Tibial artery (tissue), 4 donors: ENCODE measurements at regions of chr22 and their contacts with region 1.

Region 1: GRCh38 chr22:46219636-46220035 is 30.5 kb downstream of the CDPF1 start:
- DNase-seq: no peak
- H3K4me3 ChIP-seq: no peak overlapping the region
- H3K27ac ChIP-seq: no peak overlapping the region
- H3K4me1 ChIP-seq: no peaks in the 10 kb centered on the region
- H3K27me3 ChIP-seq: no peaks in the 10 kb centered on the region
- CTCF ChIP-seq: no peak

Region 2: DNA sequence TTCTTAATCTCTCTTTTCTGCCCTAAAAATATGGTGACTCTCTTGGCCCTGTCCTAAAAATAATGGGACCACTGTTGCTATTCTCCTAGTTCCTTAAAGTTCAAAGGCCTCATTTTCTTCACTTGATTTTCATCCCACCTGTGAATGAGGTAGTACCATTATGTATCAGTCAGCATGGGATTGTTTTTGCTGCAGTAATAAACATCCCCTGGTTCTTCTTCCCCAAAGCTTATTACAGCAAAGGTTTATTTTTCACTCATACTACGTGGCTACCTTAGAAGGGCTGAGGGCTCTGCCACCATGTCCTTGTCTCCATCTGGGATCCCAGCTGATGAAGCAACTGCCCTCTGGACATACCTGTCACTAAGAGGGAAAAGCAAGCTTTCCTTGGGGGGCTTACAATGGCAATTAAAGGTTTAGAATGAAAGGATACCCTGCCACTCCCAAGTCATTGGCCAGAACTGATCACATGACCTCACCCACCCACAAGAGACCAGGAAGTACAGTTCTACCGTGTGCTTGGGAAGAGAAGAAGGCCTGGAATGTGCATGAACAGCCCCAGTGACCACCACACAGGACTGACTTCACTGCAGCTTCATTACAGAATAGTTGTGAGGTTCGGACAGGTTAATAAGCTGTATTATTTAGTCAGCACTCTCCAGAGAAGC is 56.0 kb after region 1 on chr22:
- intact Hi-C with region 1: loop called (anchors 10 kb)
- DNase-seq: peak in 1 of 2 donors; percentile 20
- H3K4me3 ChIP-seq: no peak overlapping the region
- H3K27ac ChIP-seq: no peak overlapping the region
- H3K4me1 ChIP-seq: no peaks in the 10 kb centered on the region
- H3K27me3 ChIP-seq: no peaks in the 10 kb centered on the region
- CTCF ChIP-seq: no peak

Region 3: DNA sequence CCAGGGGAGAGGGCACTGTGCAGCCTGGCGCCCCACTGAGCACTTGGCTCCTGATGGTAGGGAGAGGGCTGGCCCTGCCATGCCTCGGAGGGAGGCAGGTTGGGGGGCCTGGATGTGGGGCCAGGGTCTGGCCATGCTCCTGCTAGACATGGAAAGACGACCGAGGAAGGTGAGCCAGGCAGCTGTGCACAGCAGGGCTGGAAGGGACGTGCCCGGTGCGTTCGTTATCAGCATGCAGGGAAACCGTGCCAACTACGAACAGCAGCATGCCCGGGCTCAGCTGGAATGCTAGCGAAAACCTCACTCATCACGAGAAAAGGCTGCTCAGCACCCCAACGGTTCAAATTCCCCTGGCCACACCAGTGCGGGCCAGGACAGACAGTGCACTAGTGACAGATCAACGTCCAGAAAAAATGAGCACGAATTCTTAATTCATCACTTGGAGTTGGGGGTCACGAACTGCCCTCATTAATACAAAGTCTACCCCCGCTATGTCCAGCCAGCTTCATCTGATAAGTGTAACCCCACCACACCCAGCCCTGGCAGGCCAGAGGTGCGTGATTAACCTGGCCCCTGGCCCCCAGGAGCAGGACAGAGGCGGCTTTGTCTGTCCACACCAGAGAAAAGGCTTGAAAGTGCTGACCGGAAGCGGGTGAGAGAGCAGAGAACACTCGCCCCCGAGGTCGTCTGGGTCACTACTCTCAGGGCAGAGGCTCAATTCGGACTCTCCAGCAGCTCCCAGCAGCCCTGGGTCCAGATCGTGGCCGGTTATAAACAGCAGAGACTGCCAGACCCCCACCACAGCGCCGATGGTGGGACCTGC is 233.6 kb after region 1 on chr22:
- intact Hi-C with region 1: no loop called
- DNase-seq: no peak
- H3K4me3 ChIP-seq: no peak overlapping the region
- H3K27ac ChIP-seq: no peak overlapping the region
- H3K4me1 ChIP-seq: no peaks in the 10 kb centered on the region
- H3K27me3 ChIP-seq: peaks cover 0 to 51% of the 10 kb centered on the region in 2 donors
- CTCF ChIP-seq: no peak